IMR-90 (cell line): ENCODE measurements at regions of chr5 and their contacts with region 1.

Region 1: DNA sequence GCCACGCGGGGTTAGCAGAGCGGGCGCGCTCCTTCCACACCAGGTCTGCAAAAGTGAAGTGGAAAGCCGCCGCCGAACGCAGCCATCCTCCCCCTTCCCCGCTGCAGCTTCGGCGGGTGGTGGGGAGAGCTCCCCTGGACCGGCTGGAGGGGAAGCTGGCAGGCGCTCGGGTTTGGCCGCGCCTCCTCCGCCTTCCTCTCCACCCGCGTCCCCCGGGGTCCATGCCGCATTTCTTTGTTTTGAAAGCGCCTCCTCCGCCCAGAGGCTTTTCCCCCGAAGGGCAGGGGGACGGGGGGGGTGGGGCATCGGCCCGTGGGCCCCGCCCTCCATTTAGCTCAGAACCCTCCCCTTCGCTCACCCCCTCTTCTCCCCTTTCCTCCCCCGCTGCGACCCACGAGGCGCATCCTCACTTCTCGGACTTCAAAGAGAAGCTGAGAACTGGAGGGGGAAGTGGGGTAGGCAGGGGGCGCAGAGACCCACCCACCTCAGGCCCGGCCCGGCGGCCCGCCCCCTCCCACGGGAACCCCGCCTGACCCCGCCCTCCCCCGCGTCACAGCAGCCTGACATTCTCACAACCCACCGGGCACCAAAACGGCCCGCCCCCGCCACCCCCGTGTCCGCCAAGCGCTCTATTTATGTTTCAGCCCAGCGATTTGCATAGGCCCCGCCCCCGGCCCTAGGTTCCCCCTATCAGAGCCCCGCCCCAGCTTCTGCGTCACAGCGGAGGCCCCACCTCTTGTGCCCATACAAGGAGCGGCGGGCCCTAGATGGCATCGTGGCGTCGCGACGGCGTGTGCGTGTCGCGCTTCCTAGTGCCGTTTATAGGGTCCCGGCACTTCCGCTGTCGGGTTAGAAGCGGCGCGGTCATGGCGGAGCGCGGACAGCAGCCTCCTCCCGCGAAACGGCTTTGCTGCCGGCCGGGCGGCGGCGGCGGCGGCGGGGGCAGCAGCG is at the start of gene ZSWIM6:
- DNase-seq: peak; percentile 99
- ATAC-seq: peak; percentile 80
- H3K4me3 ChIP-seq: peak within 1 kb of the TSS; percentile 96
- H3K27ac ChIP-seq: peak within 1 kb of the TSS; percentile 92
- H3K4me1 ChIP-seq: peaks cover 20% of the 10 kb centered on the region
- H3K27me3 ChIP-seq: no peaks in the 10 kb centered on the region
- CTCF ChIP-seq: 0 out of 2 replicates have a peak, but pooled peaks have one; percentile 1
- POLR2A ChIP-seq: peak; percentile 98
- RAD21 ChIP-seq: no peak
- total RNA-seq, gene ZSWIM6: 10.8 TPM in 2 replicates

Region 2: DNA sequence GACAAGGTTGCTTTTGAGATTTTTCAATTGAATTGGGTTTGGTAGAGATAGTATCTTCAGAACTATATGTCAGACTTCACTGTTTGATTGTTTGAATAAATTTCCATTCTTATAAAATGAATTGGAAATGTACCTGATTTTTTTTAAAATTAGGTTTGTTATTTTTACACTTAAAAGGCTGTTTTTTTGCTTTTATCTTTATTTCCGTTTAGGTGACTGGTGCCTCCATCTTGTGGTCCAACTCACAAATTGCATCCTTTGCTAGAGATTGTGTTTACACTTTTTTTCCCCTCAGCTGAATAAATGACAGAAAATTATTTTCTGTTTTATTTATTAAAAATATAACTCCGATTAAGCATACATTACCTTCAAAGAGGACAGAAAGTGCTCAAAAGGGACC is 371.1 kb before region 1 on chr5:
- CTCF ChIA-PET with region 1: no interaction called
- POLR2A ChIA-PET with region 1: no interaction called
- dilution Hi-C with region 1: no loop called
- in situ Hi-C with region 1: no loop called
- intact Hi-C with region 1: loop called (anchors 1 kb)
- DNase-seq: peak; percentile 46
- ATAC-seq: 0 out of 2 replicates have a peak, but pooled peaks have one; percentile 59
- H3K4me3 ChIP-seq: no peak overlapping the region
- H3K27ac ChIP-seq: no peak overlapping the region
- H3K4me1 ChIP-seq: no peaks in the 10 kb centered on the region
- H3K27me3 ChIP-seq: no peaks in the 10 kb centered on the region
- CTCF ChIP-seq: peak; percentile 62
- POLR2A ChIP-seq: no peak
- RAD21 ChIP-seq: peak; percentile 38

Region 3: GRCh38 chr5:61167382-61167781 is 164.3 kb before region 1 on chr5:
- CTCF ChIA-PET with region 1: interaction called, 3 read pairs
- POLR2A ChIA-PET with region 1: no interaction called
- dilution Hi-C with region 1: no loop called
- in situ Hi-C with region 1: loop called (anchors 5 kb)
- intact Hi-C with region 1: loop called (anchors 1 kb)
- DNase-seq: peak; percentile 65
- ATAC-seq: peak; percentile 59
- H3K4me3 ChIP-seq: no peak overlapping the region
- H3K27ac ChIP-seq: no peak overlapping the region
- H3K4me1 ChIP-seq: peaks cover 3% of the 10 kb centered on the region
- H3K27me3 ChIP-seq: no peaks in the 10 kb centered on the region
- CTCF ChIP-seq: peak; percentile 66
- POLR2A ChIP-seq: no peak
- RAD21 ChIP-seq: peak; percentile 78

Region 4: DNA sequence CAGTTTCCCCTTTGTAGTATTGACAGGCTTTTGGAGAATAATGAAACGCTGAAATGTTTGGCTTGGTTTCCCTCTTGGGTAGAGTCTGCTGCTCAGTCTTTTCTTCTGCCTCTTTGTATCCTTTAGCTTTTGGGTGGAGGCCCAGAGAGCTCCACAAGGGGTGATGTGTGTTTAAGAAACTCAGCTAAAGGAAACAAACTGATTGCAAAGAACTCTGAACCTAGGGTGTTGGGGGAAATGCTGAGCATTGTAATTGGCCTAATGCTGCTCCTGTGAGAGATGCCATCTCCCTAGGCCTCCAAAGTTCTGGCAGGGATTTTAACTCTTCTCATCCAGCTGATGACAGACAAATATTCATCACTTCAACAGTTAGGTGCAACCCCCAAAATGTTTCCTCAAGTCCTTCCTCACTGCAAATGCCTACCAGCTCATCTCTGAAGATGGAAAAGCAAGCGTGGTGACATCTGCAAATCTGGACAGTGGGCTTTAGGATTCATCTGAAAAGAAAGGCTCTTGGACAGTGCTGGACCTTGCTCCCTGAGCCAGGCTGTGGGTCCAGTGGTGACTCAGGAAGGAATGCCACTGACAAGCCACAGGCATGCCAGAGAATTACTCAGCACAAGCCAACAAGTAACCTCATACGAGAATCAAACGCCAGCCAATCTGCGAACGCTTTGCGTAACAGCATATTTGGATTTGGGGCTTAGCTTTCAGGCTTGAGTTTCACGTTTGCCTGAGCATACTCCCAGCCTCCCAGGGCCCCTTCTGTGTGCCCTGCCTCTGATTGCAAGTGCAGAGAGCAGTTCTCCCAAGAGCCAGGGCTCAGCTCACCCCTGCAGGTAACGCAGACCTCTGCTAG is 30.1 kb before region 1 on chr5:
- CTCF ChIA-PET with region 1: interaction called, 6 read pairs
- POLR2A ChIA-PET with region 1: interaction called, 5 read pairs
- dilution Hi-C with region 1: no loop called
- in situ Hi-C with region 1: no loop called
- intact Hi-C with region 1: loop called (anchors 1 kb)
- DNase-seq: peak; percentile 100
- ATAC-seq: peak; percentile 88
- H3K4me3 ChIP-seq: no peak overlapping the region; the same call in 1 of the 2 replicates
- H3K27ac ChIP-seq: peak overlapping the region; percentile 93
- H3K4me1 ChIP-seq: peaks cover 37% of the 10 kb centered on the region
- H3K27me3 ChIP-seq: no peaks in the 10 kb centered on the region
- CTCF ChIP-seq: peak; percentile 21; the same call in 1 of the 2 replicates
- POLR2A ChIP-seq: peak; percentile 86
- RAD21 ChIP-seq: peak; percentile 32

Region 5: GRCh38 chr5:61371516-61371915 is 39.8 kb after region 1 on chr5:
- CTCF ChIA-PET with region 1: no interaction called
- POLR2A ChIA-PET with region 1: no interaction called
- dilution Hi-C with region 1: no loop called
- in situ Hi-C with region 1: no loop called
- intact Hi-C with region 1: no loop called
- DNase-seq: no peak
- ATAC-seq: no peak
- H3K4me3 ChIP-seq: no peak overlapping the region
- H3K27ac ChIP-seq: no peak overlapping the region
- H3K4me1 ChIP-seq: 0 out of 2 replicates have a peak, but pooled peaks cover 2% of the 10 kb centered on the region
- H3K27me3 ChIP-seq: no peaks in the 10 kb centered on the region
- CTCF ChIP-seq: no peak
- POLR2A ChIP-seq: no peak
- RAD21 ChIP-seq: no peak

Region 6: DNA sequence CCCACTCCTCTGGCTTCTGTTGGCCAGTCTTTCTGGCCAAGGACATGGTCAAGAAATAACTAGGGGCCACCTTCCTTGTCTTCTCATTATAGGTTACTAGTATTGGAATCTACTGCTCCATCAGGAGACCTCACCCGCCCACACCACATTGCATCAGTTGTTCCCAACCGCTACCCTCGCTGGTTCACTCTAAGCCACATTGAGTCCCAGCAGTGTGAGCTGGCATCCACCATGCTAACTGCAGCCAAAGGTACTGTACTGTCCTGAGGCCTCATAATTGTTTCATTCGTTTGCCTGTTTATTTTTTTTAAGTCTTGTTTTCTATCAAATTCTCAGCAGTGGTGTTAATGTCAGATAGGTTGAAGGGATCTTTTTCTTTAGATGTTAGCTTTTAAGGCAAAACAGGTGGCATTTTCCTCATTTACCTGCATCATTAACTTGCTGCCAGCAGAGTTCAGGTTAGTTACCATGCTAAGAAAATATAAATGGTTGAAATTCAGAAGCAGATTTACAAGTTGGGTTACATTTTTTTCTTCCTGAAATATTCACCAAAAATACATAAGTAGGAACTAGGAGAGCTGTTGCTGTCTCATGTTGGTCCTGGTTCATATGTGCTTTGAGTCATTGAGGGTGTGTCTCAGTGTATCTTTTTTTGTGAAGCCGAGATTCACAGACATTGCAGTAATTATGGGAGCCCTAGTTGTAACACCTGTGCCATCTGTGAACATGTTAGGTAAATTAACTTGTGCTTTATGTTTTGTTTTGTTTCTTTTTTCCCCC is 207.2 kb after region 1 on chr5:
- CTCF ChIA-PET with region 1: no interaction called
- POLR2A ChIA-PET with region 1: no interaction called
- dilution Hi-C with region 1: no loop called
- in situ Hi-C with region 1: no loop called
- intact Hi-C with region 1: loop called (anchors 2 kb)
- DNase-seq: no peak
- ATAC-seq: no peak
- H3K4me3 ChIP-seq: no peak overlapping the region
- H3K27ac ChIP-seq: no peak overlapping the region
- H3K4me1 ChIP-seq: no peaks in the 10 kb centered on the region
- H3K27me3 ChIP-seq: no peaks in the 10 kb centered on the region
- CTCF ChIP-seq: no peak
- POLR2A ChIP-seq: no peak
- RAD21 ChIP-seq: no peak

Region 7: DNA sequence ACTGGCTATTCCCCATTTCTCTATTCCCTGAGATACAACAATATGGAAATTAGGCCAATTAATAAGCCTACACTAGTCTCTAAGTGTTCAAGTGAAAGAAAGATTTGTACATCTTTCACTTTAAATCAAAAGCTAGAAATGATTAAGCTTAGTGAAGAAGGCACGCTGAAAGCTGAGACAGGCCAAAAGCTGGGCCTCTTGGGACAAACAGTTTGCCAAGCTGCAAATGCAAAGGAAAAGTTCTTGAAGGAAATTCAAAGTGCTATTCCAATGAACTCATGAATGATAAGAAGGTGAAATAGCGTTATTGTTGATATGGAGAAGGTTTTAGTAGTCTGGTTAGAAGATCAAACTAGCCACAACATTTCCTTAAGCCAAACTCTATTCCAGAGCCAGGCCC is 256.5 kb after region 1 on chr5:
- CTCF ChIA-PET with region 1: no interaction called
- POLR2A ChIA-PET with region 1: no interaction called
- dilution Hi-C with region 1: no loop called
- in situ Hi-C with region 1: no loop called
- intact Hi-C with region 1: no loop called
- DNase-seq: no peak
- ATAC-seq: no peak
- H3K4me3 ChIP-seq: no peak overlapping the region
- H3K27ac ChIP-seq: no peak overlapping the region
- H3K4me1 ChIP-seq: no peaks in the 10 kb centered on the region
- H3K27me3 ChIP-seq: peaks cover 20% of the 10 kb centered on the region
- CTCF ChIP-seq: no peak
- POLR2A ChIP-seq: no peak
- RAD21 ChIP-seq: no peak

Region 8: GRCh38 chr5:61933787-61934626 is 602.3 kb after region 1 on chr5:
- CTCF ChIA-PET with region 1: no interaction called
- POLR2A ChIA-PET with region 1: no interaction called
- dilution Hi-C with region 1: no loop called
- in situ Hi-C with region 1: no loop called
- intact Hi-C with region 1: loop called (anchors 5 kb)
- DNase-seq: peak; percentile 29
- ATAC-seq: peak; percentile 57; the same call in 1 of the 2 replicates
- H3K4me3 ChIP-seq: no peak overlapping the region
- H3K27ac ChIP-seq: no peak overlapping the region
- H3K4me1 ChIP-seq: no peaks in the 10 kb centered on the region
- H3K27me3 ChIP-seq: no peaks in the 10 kb centered on the region
- CTCF ChIP-seq: peak; percentile 52
- POLR2A ChIP-seq: no peak
- RAD21 ChIP-seq: peak; percentile 62

Region 9: DNA sequence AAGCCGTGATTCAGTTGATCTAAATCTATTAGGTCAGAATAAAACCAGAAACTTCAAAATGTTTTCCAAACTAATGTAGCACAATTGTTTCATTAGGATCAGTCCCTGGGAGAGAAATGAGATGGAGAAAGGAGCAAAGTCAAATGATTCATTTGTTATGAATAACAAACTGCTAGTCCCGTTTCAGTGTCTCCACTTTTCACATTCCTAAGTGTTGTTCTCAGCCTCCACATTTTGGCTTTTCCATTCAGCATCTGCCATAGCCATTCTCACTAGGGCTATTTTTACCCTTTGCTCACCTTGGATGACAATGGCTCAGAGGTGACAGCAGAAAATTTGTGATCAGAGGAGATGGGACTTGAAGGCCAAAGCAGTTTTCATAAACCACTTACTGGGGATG is 660.2 kb after region 1 on chr5:
- CTCF ChIA-PET with region 1: no interaction called
- POLR2A ChIA-PET with region 1: no interaction called
- dilution Hi-C with region 1: no loop called
- in situ Hi-C with region 1: no loop called
- intact Hi-C with region 1: no loop called
- DNase-seq: no peak
- ATAC-seq: no peak
- H3K4me3 ChIP-seq: no peak overlapping the region
- H3K27ac ChIP-seq: no peak overlapping the region
- H3K4me1 ChIP-seq: no peaks in the 10 kb centered on the region
- H3K27me3 ChIP-seq: no peaks in the 10 kb centered on the region
- CTCF ChIP-seq: no peak
- POLR2A ChIP-seq: no peak
- RAD21 ChIP-seq: no peak